AG04450 (cell line): ENCODE measurements at regions of chr7 and their contacts with region 1.

Region 1: GRCh38 chr7:149005241-149006050 is 22.9 kb downstream of the PDIA4 start:
- DNase-seq: no peak
- H3K4me3 ChIP-seq: no peak overlapping the region
- H3K27ac ChIP-seq: no peak overlapping the region
- H3K27me3 ChIP-seq: no peaks in the 10 kb centered on the region
- CTCF ChIP-seq: peak; percentile 74

Region 2: GRCh38 chr7:148849393-148850098 is 155.9 kb before region 1 on chr7:
- CTCF ChIA-PET with region 1: no interaction called
- POLR2A ChIA-PET with region 1: no interaction called
- DNase-seq: no peak
- H3K4me3 ChIP-seq: no peak overlapping the region
- H3K27ac ChIP-seq: no peak overlapping the region
- H3K27me3 ChIP-seq: no peaks in the 10 kb centered on the region
- CTCF ChIP-seq: no peak

Region 3: DNA sequence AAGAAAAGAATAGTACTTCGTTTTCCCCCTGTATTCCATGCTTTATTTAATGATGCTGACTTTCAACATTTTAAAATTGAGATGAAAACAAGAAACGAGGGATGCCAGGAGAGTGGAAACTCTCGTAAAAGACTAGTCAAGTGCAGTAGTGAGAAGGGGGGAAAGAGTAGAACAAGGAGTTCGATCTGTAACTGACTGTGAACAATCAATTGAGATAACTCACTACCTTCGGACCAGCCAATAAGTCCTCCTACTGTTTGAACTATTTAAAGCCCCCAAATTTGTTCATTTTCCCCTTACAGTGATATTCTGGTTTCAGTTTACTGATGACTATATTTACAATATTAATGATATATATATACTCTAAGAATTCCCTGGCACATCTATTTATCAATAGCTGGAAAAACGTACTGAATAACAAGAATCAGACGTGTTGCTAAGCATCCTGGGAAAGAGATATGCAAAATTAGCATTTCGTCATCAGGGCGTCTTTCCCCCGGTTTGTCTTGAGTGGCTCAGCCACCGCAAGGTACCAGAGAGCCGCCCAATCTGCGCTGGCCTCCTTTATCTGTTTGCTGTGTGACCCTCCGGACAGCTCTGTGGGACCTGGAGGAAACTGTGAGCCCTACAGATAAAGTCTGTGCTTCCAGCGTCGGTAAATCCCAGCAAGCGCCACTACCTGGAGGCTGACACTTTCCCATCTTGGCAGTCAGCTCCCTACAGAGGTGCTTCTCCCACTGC is 18.3 kb before region 1 on chr7:
- CTCF ChIA-PET with region 1: interaction called, 18 read pairs
- POLR2A ChIA-PET with region 1: no interaction called
- DNase-seq: peak; percentile 72
- H3K4me3 ChIP-seq: peak overlapping the region; percentile 96
- H3K27ac ChIP-seq: peak overlapping the region; percentile 69
- H3K27me3 ChIP-seq: no peaks in the 10 kb centered on the region
- CTCF ChIP-seq: no peak

Region 4: DNA sequence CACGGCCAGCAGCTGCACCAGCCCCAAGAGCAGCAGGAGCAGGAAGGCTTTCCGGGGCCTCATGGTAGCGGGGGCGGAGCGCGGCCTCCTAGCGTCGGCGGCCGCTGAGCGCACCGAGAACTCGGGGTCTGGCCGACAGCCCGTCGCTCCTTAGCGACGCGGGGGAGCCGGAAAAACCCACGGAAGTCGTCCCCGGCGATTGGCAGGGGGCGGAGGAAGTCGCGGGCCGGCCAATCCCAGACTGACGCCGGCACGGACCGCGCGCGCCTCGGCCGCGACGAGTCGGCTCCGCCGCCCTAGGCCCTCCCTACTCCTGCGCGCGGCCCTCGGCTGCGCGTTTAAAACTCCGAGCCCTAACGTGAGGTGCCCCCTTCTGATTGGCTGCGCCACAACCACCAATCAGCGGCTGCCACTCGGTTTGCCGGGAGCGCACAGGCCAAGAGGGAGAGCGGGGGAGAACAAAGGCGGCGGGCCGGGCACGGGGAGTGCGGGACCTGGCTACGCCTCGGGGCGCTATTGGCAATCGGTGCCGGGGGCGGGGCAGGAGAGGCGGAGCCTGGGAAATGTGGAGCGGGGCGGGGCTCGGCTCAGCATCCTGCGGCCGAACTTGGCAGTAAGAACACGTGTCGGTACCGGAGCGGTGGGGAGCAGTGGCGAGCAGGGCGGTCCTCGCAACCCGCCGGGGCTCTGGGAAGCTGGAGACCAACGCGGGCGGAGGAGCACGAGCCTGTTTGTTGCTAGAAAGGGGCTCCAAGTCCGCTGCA is 23.1 kb after region 1 on chr7 and contains the start of gene PDIA4:
- CTCF ChIA-PET with region 1: interaction called, 54 read pairs
- POLR2A ChIA-PET with region 1: no interaction called
- DNase-seq: peak; percentile 98
- H3K4me3 ChIP-seq: peak within 1 kb of the TSS; percentile 84
- H3K27ac ChIP-seq: peak within 1 kb of the TSS; percentile 80
- H3K27me3 ChIP-seq: no peaks in the 10 kb centered on the region
- CTCF ChIP-seq: peak; percentile 35
- polyA plus RNA-seq, gene PDIA4: 215 and 227 TPM in 2 replicates

Region 5: GRCh38 chr7:149071641-149072437 is 66.4 kb after region 1 on chr7:
- CTCF ChIA-PET with region 1: interaction called, 72 read pairs
- POLR2A ChIA-PET with region 1: no interaction called
- DNase-seq: no peak
- H3K4me3 ChIP-seq: no peak overlapping the region
- H3K27ac ChIP-seq: no peak overlapping the region
- H3K27me3 ChIP-seq: no peaks in the 10 kb centered on the region
- CTCF ChIP-seq: 0 out of 2 replicates have a peak, but pooled peaks have one; percentile 3

Region 6: GRCh38 chr7:149090397-149091195 is 85.2 kb after region 1 on chr7 and contains the start of gene ZNF786:
- CTCF ChIA-PET with region 1: interaction called, 12 read pairs
- POLR2A ChIA-PET with region 1: no interaction called
- DNase-seq: peak; percentile 61
- H3K4me3 ChIP-seq: peak within 1 kb of the TSS; percentile 79
- H3K27ac ChIP-seq: peak within 1 kb of the TSS; percentile 87
- H3K27me3 ChIP-seq: no peaks in the 10 kb centered on the region
- CTCF ChIP-seq: peak; percentile 83
- polyA plus RNA-seq, gene ZNF786: 2.2 TPM in 2 replicates